ENCODE measurements at regions of chr2 and their contacts with region 1.

Region 1: GRCh38 chr2:12733846-12734245 is 17.1 kb downstream of the TRIB2 start:
- DNase-seq: no peak
- H3K4me3 ChIP-seq: no peak overlapping the region
- H3K27ac ChIP-seq: peak overlapping the region; percentile 86 to 96
- H3K4me1 ChIP-seq: peaks cover 73% of the 10 kb centered on the region
- H3K27me3 ChIP-seq: no peaks in the 10 kb centered on the region
- CTCF ChIP-seq: no peak
- POLR2A ChIP-seq: no peak

Region 2: GRCh38 chr2:12807907-12808810 is 74.3 kb after region 1 on chr2:
- intact Hi-C with region 1: loop called (anchors 10 kb)
- DNase-seq: peak; percentile 70
- H3K4me3 ChIP-seq: no peak overlapping the region
- H3K27ac ChIP-seq: peak overlapping the region; percentile 64 to 81
- H3K4me1 ChIP-seq: peaks cover 26% of the 10 kb centered on the region
- H3K27me3 ChIP-seq: no peaks in the 10 kb centered on the region
- CTCF ChIP-seq: no peak
- POLR2A ChIP-seq: no peak

Measured in testis (tissue), 5 donors.